Activated CD4-positive, alpha-beta T cell treated with anti-CD3 and anti-CD28 coated beads for 36 hours (primary cell): ENCODE measurements at regions of chr6 and their contacts with region 1.

Region 1: GRCh38 chr6:34986845-34987246 is 97.8 kb downstream of the ANKS1A start:
- DNase-seq: peak; percentile 82
- ATAC-seq: peak; percentile 70
- H3K4me3 Mint-ChIP-seq: no peak overlapping the region
- H3K27ac Mint-ChIP-seq: no peak overlapping the region
- H3K4me1 Mint-ChIP-seq: no peaks in the 10 kb centered on the region
- H3K27me3 Mint-ChIP-seq: no peaks in the 10 kb centered on the region

Region 2: GRCh38 chr6:34973547-34974248 is 13.1 kb before region 1 on chr6:
- CTCF ChIA-PET with region 1: interaction called, 13 read pairs
- POLR2A ChIA-PET with region 1: no interaction called
- intact Hi-C with region 1: no loop called
- DNase-seq: no peak
- ATAC-seq: no peak
- H3K4me3 Mint-ChIP-seq: no peak overlapping the region
- H3K27ac Mint-ChIP-seq: no peak overlapping the region
- H3K4me1 Mint-ChIP-seq: no peaks in the 10 kb centered on the region
- H3K27me3 Mint-ChIP-seq: no peaks in the 10 kb centered on the region

Region 3: DNA sequence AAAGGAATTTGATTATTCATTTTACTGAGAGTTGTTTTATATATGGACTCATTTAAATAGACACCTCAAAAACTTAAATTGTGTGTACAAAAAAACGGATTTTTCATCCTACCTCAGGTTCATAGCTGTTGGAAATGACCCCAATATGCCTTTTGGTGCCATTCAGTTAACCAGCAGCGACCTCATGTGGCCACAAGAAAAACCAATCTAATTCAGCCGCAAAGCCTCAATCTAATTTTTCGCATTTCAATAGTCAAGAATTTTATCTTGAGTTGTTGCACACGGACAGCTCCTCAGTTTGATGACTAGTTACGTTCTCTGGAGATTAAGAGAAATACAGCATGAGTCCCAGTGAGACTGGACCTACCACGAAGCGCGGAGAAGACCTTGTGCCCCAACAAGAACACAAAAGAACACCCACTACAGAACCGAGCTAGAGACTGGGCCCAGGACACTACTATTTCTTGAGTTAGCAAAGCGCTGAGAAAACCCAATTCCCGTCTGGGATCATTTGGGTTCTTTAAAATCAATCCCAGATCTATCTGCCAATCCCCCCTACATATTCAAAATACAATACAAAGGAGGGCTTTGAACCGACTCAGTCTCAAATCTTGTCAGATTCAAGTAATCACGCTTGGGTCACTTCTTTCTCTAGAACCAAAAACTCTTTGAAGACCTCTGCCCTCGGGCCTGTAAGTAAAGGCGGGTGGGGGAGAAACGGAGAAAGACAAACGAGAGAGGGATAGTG is 153.2 kb after region 1 on chr6:
- CTCF ChIA-PET with region 1: interaction called, 56 read pairs
- POLR2A ChIA-PET with region 1: no interaction called
- intact Hi-C with region 1: loop called (anchors 1 kb)
- DNase-seq: peak; percentile 70
- ATAC-seq: peak; percentile 39
- H3K4me3 Mint-ChIP-seq: no peak overlapping the region
- H3K27ac Mint-ChIP-seq: no peak overlapping the region
- H3K4me1 Mint-ChIP-seq: peaks cover 13% of the 10 kb centered on the region
- H3K27me3 Mint-ChIP-seq: peaks cover 18% of the 10 kb centered on the region

Region 4: GRCh38 chr6:35202066-35202546 is 215.3 kb after region 1 on chr6:
- CTCF ChIA-PET with region 1: interaction called, 61 read pairs
- POLR2A ChIA-PET with region 1: no interaction called
- intact Hi-C with region 1: loop called (anchors 1 to 10 kb)
- DNase-seq: no peak
- ATAC-seq: no peak
- H3K4me3 Mint-ChIP-seq: no peak overlapping the region
- H3K27ac Mint-ChIP-seq: no peak overlapping the region
- H3K4me1 Mint-ChIP-seq: no peaks in the 10 kb centered on the region
- H3K27me3 Mint-ChIP-seq: peaks cover 26% of the 10 kb centered on the region